Lower leg skin (tissue), 4 donors: ENCODE measurements at regions of chr12 and their contacts with region 1.

Region 1: DNA sequence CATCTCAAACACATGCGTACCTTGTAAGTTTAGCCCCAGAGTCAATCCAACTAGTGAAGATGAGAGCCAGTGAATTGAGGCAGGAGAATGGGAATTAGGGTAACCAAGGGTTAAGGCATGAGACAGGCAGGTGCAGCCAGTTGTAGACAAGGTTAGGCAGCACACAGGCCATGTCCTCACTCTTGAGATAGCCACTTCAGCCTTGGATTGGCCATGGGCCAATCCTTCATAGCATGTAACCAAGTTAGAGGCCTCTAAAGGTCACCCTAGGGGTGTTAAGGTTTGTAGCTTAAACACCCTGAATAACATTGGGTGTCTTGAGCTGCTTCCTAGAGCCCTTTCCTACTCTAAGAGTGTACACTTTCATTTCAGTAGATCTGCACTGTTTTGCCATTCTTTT is 208.2 kb upstream of the RBM19 start:
- DNase-seq: no peak
- H3K4me3 ChIP-seq: no peak overlapping the region
- CTCF ChIP-seq: no peak
- POLR2A ChIP-seq: no peak

Region 2: GRCh38 chr12:114512345-114512744 is 338.0 kb after region 1 on chr12:
- intact Hi-C with region 1: no loop called
- DNase-seq: no peak
- H3K4me3 ChIP-seq: no peak overlapping the region
- CTCF ChIP-seq: no peak
- POLR2A ChIP-seq: no peak

Region 3: DNA sequence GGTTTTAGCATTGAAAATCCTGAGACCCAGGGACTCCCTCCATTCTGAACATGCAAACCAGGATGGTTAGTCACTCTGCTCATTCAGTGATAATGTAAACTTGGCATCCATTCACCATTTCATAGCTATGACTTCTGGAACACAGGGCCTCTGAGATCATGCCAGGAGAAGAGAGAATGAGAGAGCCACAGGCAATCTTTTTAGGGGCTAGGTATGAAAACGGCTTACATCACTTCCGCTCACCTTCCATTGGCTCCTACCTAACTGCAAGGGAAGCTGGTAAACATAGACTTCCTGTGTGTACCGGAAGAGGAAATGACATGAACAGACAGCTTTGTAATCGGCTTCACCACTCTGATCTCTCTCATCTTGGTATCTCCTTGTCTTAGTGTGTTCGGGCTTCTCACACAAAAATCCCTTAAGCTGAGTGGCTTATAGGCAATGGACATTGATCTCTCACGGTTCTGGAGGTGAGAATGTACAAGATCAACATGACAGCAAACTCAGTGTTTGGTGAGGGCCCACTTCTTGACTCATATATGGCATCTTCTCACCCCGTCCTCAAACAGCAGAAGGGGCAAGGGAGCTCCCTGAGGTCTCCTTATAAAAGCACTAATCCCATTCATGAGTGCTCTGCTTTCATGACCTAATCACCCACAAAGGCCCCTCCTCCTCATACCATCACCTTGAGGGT is 975.5 kb after region 1 on chr12:
- intact Hi-C with region 1: loop called (anchors 5 kb)
- DNase-seq: no peak
- H3K4me3 ChIP-seq: no peak overlapping the region
- CTCF ChIP-seq: no peak
- POLR2A ChIP-seq: no peak